ENCODE measurements at regions of chr2 and their contacts with region 1.

Region 1: GRCh38 chr2:227430639-227431038 is 41.3 kb upstream of the AGFG1 start:
- DNase-seq: no peak
- H3K4me3 Mint-ChIP-seq: no peak overlapping the region
- H3K27ac Mint-ChIP-seq: no peak overlapping the region
- H3K4me1 Mint-ChIP-seq: peaks cover 5% of the 10 kb centered on the region
- H3K27me3 Mint-ChIP-seq: peaks cover 2% of the 10 kb centered on the region

Region 2: DNA sequence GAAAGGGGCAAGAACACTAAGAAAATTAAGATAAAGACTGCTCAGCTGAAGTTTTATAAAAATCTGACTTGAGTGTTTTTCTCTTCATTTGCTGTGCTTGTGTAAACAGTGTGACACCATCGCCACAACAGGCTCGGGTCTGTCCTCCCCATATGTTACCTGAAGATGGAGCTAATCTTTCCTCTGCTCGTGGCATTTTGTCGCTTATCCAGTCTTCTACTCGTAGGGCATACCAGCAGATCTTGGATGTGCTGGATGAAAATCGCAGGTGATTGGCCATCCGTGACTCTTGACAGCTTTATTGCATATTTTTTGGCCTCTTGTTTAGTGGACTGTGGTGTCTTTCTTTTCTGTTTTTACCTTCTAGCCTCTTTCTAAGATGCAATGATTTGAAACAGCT is 83.5 kb before region 1 on chr2:
- CTCF ChIA-PET with region 1: no interaction called
- intact Hi-C with region 1: no loop called
- DNase-seq: no peak
- H3K4me3 Mint-ChIP-seq: no peak overlapping the region
- H3K27ac Mint-ChIP-seq: no peak overlapping the region
- H3K4me1 Mint-ChIP-seq: peaks cover 23% of the 10 kb centered on the region
- H3K27me3 Mint-ChIP-seq: no peaks in the 10 kb centered on the region

Region 3: DNA sequence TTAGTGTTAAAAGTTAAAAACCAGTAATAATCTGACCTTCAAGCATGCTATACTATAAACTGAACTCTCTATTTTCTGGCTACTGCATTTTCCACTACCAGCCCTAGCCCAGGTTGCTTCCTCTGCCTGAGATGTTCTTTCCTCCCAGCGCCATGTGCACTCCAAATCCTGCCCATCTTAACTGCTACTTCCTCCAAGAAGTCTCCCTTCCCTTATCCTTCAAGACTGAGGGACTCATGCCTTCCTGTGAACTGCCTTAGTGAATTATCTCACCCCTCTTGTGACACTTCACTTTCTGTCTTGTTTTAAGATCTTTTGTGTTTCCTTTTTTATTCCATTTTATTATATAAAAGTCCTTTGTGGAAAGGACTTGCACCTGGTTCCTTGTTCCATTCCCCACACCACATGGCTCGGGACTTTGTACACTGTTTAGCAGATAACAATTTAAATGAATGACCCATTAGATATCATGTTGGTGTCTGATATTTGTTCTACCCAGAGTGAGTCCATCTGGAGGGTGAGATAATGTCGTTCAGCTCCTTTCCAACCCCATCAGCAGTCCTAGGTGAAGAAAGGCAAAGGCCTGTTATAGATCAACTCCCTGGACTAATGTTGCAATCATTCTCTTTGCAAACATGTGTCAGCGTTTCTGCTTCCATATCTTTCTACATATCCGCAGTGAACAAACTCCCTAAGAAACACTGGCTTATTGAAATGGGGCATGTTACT is 20.5 kb after region 1 on chr2:
- CTCF ChIA-PET with region 1: interaction called, 4 read pairs
- intact Hi-C with region 1: loop called (anchors 2 kb)
- DNase-seq: no peak
- H3K4me3 Mint-ChIP-seq: no peak overlapping the region
- H3K27ac Mint-ChIP-seq: no peak overlapping the region
- H3K4me1 Mint-ChIP-seq: peaks cover 26% of the 10 kb centered on the region
- H3K27me3 Mint-ChIP-seq: peaks cover 3% of the 10 kb centered on the region

Measured in activated naive CD4-positive, alpha-beta T cell treated with anti-CD3 and anti-CD28 coated beads for 36 hours (primary cell).